ENCODE measurements at regions of chr16 and their contacts with region 1.

Region 1: GRCh38 chr16:82748026-82748425 is 121.3 kb downstream of the CDH13 start:
- DNase-seq: peak; percentile 22 to 67
- ATAC-seq: peak; percentile 53 to 95
- H3K4me3 ChIP-seq: peak overlapping the region in 2 of 4 donors; percentile 10 to 23
- H3K27ac ChIP-seq: peak overlapping the region; percentile 30 to 65 (median 50)
- H3K4me1 ChIP-seq: peaks cover 15 to 22% of the 10 kb centered on the region in 2 donors
- H3K27me3 ChIP-seq: no peaks in the 10 kb centered on the region
- CTCF ChIP-seq: peak in 2 of 5 experiments; percentile 32 to 37
- POLR2A ChIP-seq: no peak

Region 2: DNA sequence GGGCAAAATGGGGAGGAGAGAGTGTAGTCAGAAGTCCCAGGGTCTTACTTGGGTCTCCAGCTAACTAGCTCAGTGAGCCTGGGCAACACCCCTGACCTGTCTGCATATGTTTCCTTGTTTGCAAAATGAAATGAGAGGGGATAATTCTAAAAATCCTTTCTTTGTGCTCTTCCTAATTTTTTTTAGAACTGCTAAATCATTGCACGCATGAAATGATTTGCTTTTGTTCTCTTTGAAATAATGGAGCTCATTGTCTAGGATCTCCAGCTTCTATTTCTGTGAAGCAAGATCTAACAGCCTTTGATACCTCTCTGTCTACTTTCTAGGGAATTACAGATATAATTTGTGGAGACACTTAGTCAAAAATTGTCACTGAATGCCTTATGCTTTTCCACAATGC is 60.0 kb after region 1 on chr16:
- in situ Hi-C with region 1: no loop called
- intact Hi-C with region 1: no loop called
- DNase-seq: no peak
- ATAC-seq: no peak
- H3K4me3 ChIP-seq: no peak overlapping the region
- H3K27ac ChIP-seq: no peak overlapping the region
- H3K4me1 ChIP-seq: peaks cover 0 to 5% of the 10 kb centered on the region in 2 donors
- H3K27me3 ChIP-seq: no peaks in the 10 kb centered on the region
- CTCF ChIP-seq: no peak
- POLR2A ChIP-seq: no peak

Region 3: GRCh38 chr16:82820855-82821254 is 72.8 kb after region 1 on chr16:
- in situ Hi-C with region 1: no loop called
- intact Hi-C with region 1: loop called (anchors 2 kb)
- DNase-seq: no peak
- ATAC-seq: no peak
- H3K4me3 ChIP-seq: no peak overlapping the region
- H3K27ac ChIP-seq: no peak overlapping the region
- H3K4me1 ChIP-seq: no peaks in the 10 kb centered on the region
- H3K27me3 ChIP-seq: no peaks in the 10 kb centered on the region
- CTCF ChIP-seq: no peak
- POLR2A ChIP-seq: no peak